ENCODE measurements at regions of chr1 and their contacts with region 1.

Region 1: DNA sequence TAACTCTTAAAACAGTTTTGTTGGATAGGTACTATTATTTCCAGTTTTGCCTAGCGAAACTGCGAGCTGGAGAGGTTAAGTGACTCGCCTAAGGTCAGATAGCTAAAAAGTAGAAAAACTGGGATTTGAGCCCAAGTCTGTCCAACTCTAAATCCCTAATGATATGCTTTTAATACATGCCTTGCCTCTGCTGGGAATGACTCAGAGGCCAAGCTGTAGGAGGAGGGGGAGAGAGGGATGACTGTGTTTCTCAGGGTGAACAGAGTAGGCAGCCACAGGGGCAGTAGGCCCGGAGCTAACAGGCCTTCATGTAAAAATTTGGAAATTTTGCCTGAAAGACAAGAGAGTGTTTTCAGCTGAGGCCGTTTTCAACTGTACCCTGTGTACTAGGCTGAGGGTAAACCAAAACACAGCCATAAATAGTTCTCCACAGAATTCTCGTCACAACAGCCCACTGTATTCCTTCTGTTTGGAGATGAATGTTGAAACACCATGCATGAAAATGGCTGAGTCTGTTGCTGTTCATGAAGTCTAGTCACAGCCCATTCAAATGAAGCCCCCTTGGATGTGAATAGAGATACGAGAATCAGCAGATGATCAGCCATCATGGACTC is 107.5 kb upstream of the HOOK1 start:
- DNase-seq: peak in 2 of 5 donors; percentile 44 to 80
- H3K4me3 ChIP-seq: no peak overlapping the region
- H3K27ac ChIP-seq: no peak overlapping the region
- H3K4me1 ChIP-seq: no peaks in the 10 kb centered on the region
- H3K27me3 ChIP-seq: no peaks in the 10 kb centered on the region
- CTCF ChIP-seq: no peak

Region 2: GRCh38 chr1:58739856-58740466 is 967.3 kb before region 1 on chr1:
- intact Hi-C with region 1: loop called (anchors 10 kb)
- DNase-seq: peak in 2 of 5 donors; percentile 77 to 81
- H3K4me3 ChIP-seq: no peak overlapping the region
- H3K27ac ChIP-seq: no peak overlapping the region
- H3K4me1 ChIP-seq: no peaks in the 10 kb centered on the region
- H3K27me3 ChIP-seq: no peaks in the 10 kb centered on the region
- CTCF ChIP-seq: peak; percentile 72

Region 3: DNA sequence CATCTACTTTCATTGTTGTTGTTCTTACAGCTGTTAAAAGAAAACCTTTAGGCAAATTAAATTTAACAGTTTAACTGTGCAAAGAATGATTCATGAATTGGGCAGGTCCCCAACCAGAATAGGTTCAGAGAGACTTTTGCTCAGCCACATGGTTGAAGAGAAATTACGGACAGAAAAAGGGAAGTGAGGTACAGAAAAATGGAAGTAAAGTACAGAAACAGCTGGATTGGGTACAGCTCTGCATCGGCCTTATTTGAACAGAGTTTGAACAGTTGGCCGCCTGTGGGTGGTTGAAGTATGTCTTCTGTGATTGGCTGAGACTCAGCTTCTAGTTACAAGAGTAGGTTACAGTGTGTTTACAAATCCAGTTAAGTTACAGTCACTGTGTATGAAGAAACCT is 200.3 kb before region 1 on chr1:
- intact Hi-C with region 1: no loop called
- DNase-seq: peak in 1 of 5 donors; percentile 37
- H3K4me3 ChIP-seq: no peak overlapping the region
- H3K27ac ChIP-seq: no peak overlapping the region
- H3K4me1 ChIP-seq: peaks cover 0 to 5% (median 0%) of the 10 kb centered on the region in 3 donors
- H3K27me3 ChIP-seq: no peaks in the 10 kb centered on the region
- CTCF ChIP-seq: no peak

Region 4: DNA sequence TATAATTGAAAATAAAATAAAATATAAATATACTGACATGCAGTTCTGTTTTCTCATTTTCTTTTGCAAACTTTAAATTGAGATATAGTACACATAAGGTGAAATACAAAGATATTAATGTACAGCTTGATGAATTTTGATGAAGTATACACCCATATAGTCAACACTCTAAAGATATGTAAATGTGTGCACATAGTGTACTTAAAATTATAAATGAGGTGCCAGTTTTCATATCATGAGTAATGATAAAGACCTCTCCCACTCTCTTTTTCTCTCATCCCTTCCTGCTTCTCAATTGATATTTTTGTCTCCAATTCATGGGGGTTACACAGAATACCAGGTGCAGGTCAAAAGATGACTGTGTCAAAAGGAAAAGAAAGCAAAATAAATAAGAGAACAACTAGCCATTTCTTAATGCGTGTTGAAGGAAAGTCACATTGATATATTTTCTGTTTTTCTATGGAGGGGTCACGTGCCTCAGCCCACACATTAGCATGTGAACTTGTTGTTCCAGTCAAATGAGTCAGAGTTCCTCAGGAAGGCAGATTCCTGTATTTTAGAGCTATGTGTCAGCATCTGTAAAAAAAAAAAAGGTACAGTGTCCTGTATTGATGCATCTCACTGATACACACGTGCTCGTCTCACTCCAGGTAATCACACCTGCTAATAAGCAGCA is 43.2 kb after region 1 on chr1:
- intact Hi-C with region 1: no loop called
- DNase-seq: peak in 1 of 5 donors; percentile 56
- H3K4me3 ChIP-seq: no peak overlapping the region
- H3K27ac ChIP-seq: peak overlapping the region in 1 of 2 donors; percentile 52
- H3K4me1 ChIP-seq: peaks cover 4 to 5% (median 5%) of the 10 kb centered on the region in 3 donors
- H3K27me3 ChIP-seq: no peaks in the 10 kb centered on the region
- CTCF ChIP-seq: no peak